ENCODE measurements at regions of chr7 and their contacts with region 1.

Region 1: GRCh38 chr7:332646-333392 is 42.8 kb downstream of the FOXL3 start:
- DNase-seq: no peak
- H3K4me3 ChIP-seq: peak overlapping the region; percentile 20
- CTCF ChIP-seq: peak; percentile 73

Region 2: DNA sequence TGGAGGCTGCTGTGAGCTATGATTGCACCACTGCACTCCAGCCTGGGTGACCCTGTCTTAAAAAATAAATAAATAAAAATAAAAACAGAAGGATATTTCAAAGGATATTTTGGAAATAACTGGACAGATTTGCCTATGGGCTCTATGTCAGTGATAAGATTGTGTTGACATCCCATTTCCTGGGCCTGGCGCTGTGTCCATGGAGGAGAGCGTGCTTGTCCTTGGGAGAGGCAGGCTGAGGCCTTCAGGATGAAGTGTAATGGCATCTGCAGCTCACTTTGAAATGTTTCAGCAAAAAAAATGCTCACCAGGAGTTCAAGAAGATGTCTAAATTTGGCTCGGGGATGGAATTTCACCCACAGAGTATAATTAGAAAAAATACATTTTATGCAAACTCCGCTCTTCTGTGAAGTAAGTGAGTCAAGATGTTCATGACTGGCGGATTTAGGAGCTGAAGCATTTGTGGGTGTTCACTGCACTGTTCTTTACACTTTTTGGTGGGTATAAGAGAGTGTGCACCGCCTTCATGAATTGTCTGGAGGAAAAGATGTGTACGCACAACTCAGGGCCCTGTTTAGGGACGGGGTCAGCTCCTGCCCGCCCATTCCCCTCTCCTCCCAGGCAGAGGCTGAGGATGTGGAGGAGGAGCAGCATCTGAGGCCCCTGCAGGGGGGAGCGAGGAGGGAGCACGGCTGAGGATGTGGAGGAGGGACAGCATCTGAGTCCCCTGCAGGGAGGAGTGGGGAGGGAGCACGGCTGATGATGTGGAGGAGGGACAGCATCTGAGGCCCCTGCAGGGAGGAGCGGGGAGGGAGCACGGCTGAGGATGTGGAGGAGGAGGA is 61.3 kb before region 1 on chr7:
- in situ Hi-C with region 1: no loop called
- DNase-seq: no peak
- H3K4me3 ChIP-seq: no peak overlapping the region
- CTCF ChIP-seq: no peak

Region 3: GRCh38 chr7:391411-391951 is 58.7 kb after region 1 on chr7:
- in situ Hi-C with region 1: loop called (anchors 5 kb)
- DNase-seq: no peak
- H3K4me3 ChIP-seq: no peak overlapping the region
- CTCF ChIP-seq: no peak

Region 4: GRCh38 chr7:490461-491291 is 157.9 kb after region 1 on chr7:
- in situ Hi-C with region 1: loop called (anchors 5 kb)
- DNase-seq: no peak
- H3K4me3 ChIP-seq: no peak overlapping the region
- CTCF ChIP-seq: no peak

Region 5: DNA sequence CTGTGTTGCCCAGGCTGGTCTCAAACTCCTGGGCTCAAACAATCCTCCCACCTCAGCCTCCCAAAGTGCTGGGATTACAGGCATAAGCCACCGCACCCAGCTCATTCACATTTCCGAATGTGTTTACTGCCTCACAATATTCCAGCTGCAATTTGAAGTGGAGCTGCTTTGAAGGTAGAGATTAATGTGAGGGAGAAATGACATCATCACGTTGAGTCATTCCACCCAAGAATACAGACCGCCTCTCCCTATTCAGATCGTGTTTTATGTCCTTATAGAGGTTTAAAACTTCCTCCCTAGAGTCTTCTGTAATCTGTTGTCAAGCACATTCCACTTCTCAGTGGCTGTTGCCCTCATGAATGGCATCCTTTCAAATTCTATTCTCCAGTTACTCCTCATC is 287.2 kb after region 1 on chr7:
- in situ Hi-C with region 1: loop called (anchors 10 kb)
- DNase-seq: peak; percentile 34
- H3K4me3 ChIP-seq: no peak overlapping the region
- CTCF ChIP-seq: no peak

Region 6: GRCh38 chr7:774161-775109 is 441.6 kb after region 1 on chr7:
- in situ Hi-C with region 1: loop called (anchors 10 kb)
- DNase-seq: no peak
- H3K4me3 ChIP-seq: no peak overlapping the region
- CTCF ChIP-seq: peak; percentile 92